Psoas muscle (tissue), 8 donors: ENCODE measurements at regions of chr6 and their contacts with region 1.

Region 1: GRCh38 chr6:34161857-34162515 is 16.1 kb upstream of the GRM4 start:
- DNase-seq: no peak
- ATAC-seq: no peak
- H3K4me3 ChIP-seq: no peak overlapping the region
- H3K27ac ChIP-seq: no peak overlapping the region
- H3K4me1 ChIP-seq: no peaks in the 10 kb centered on the region
- H3K27me3 ChIP-seq: peaks cover 0 to 3% (median 3%) of the 10 kb centered on the region in 3 donors
- CTCF ChIP-seq: no peak

Region 2: DNA sequence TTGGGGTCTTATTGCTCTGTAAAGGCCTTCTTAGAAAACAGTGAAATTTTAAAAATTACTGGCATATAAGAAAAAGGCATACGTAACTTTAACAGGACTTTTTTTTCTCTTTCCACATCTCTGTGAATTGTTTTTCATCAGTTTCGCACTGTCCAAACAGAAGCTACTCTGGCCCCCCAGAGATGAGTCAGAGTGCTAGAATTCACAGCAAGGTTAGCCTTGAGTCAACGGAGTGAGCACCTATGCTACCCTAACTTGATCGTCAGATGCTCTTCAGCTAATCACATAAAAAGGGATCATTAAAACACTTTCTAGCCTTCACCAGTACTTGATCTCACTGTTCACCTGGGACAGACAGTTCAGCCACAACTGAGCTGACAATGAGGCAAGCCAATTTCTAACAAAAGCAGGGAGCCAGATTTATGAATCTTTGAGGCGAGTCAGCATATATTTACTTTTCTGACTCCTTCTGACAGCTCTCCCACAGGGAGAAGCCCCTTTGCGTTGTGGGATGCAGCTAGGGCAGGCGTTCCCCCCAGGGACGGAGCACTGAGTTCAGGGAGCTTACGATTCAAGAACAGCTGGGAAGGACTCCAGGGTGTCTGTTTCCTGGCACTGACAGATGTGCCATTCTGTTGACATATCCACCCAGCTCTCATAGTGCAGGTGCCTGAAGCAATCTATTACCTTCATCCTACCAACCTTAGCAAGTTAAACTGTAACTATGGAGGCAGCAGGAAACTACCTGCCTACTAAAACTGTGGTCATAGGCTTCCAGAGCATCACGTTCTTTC is 440.5 kb after region 1 on chr6:
- intact Hi-C with region 1: loop called in 1 of 2 experiments (anchors 10 kb)
- DNase-seq: no peak
- ATAC-seq: peak; percentile 58 to 82 (median 74)
- H3K4me3 ChIP-seq: peak overlapping the region; percentile 1
- H3K27ac ChIP-seq: peak overlapping the region; percentile 66
- H3K4me1 ChIP-seq: peaks cover 71% of the 10 kb centered on the region
- H3K27me3 ChIP-seq: no peaks in the 10 kb centered on the region
- CTCF ChIP-seq: no peak